CD8-positive, alpha-beta T cell (primary cell): ENCODE measurements at regions of chr2 and their contacts with region 1.

Region 1: GRCh38 chr2:135985018-135985825 is at the start of gene DARS1:
- DNase-seq: peak; percentile 58 to 91 (median 76)
- ATAC-seq: peak; percentile 82
- H3K4me3 ChIP-seq: peak within 1 kb of the TSS; percentile 99
- H3K4me3 Mint-ChIP-seq: peak within 1 kb of the TSS; percentile 94
- H3K27ac ChIP-seq: peak within 1 kb of the TSS; percentile 95 to 99
- H3K27ac Mint-ChIP-seq: peak within 1 kb of the TSS; percentile 98
- H3K4me1 ChIP-seq: peaks cover 30% of the 10 kb centered on the region
- H3K4me1 Mint-ChIP-seq: peaks cover 50% of the 10 kb centered on the region
- H3K27me3 ChIP-seq: no peaks in the 10 kb centered on the region
- H3K27me3 Mint-ChIP-seq: no peaks in the 10 kb centered on the region
- CTCF ChIP-seq: no peak
- total RNA-seq, gene DARS1: 33.4 to 35.8 TPM

Region 2: GRCh38 chr2:135741395-135742324 is 243.6 kb before region 1 on chr2 and contains the start of gene UBXN4:
- CTCF ChIA-PET with region 1: no interaction called
- POLR2A ChIA-PET with region 1: no interaction called
- intact Hi-C with region 1: loop called in 1 of 2 experiments (anchors 10 kb)
- DNase-seq: peak; percentile 89 to 99 (median 94)
- ATAC-seq: peak; percentile 87
- H3K4me3 ChIP-seq: peak within 1 kb of the TSS; percentile 69 to 96
- H3K4me3 Mint-ChIP-seq: peak within 1 kb of the TSS; percentile 98
- H3K27ac ChIP-seq: peak within 1 kb of the TSS; percentile 89 to 98
- H3K27ac Mint-ChIP-seq: peak within 1 kb of the TSS; percentile 98
- H3K4me1 ChIP-seq: peaks cover 28% of the 10 kb centered on the region
- H3K4me1 Mint-ChIP-seq: peaks cover 43% of the 10 kb centered on the region
- H3K27me3 ChIP-seq: no peaks in the 10 kb centered on the region
- H3K27me3 Mint-ChIP-seq: no peaks in the 10 kb centered on the region
- CTCF ChIP-seq: no peak
- total RNA-seq, gene UBXN4: 157 to 172 TPM

Region 3: GRCh38 chr2:135948642-135949355 is 36.4 kb before region 1 on chr2:
- CTCF ChIA-PET with region 1: no interaction called
- POLR2A ChIA-PET with region 1: no interaction called
- intact Hi-C with region 1: loop called (anchors 5 kb)
- DNase-seq: peak in 6 of 9 experiments; percentile 10 to 62 (median 25)
- ATAC-seq: peak; percentile 72
- H3K4me3 ChIP-seq: no peak overlapping the region
- H3K4me3 Mint-ChIP-seq: peak overlapping the region; percentile 37
- H3K27ac ChIP-seq: peak overlapping the region in 1 of 2 experiments; percentile 26
- H3K27ac Mint-ChIP-seq: peak overlapping the region; percentile 85
- H3K4me1 ChIP-seq: peaks cover 7% of the 10 kb centered on the region
- H3K4me1 Mint-ChIP-seq: peaks cover 61% of the 10 kb centered on the region
- H3K27me3 ChIP-seq: no peaks in the 10 kb centered on the region
- H3K27me3 Mint-ChIP-seq: no peaks in the 10 kb centered on the region
- CTCF ChIP-seq: no peak

Region 4: GRCh38 chr2:136052369-136053362 is 67.4 kb after region 1 on chr2:
- CTCF ChIA-PET with region 1: no interaction called
- POLR2A ChIA-PET with region 1: interaction called, 5 read pairs
- intact Hi-C with region 1: loop called in 1 of 2 experiments (anchors 5 kb)
- DNase-seq: peak in 2 of 9 experiments; percentile 39 to 60
- ATAC-seq: peak; percentile 22
- H3K4me3 ChIP-seq: no peak overlapping the region
- H3K4me3 Mint-ChIP-seq: peak overlapping the region; percentile 38
- H3K27ac ChIP-seq: peak overlapping the region; percentile 23 to 45
- H3K27ac Mint-ChIP-seq: peak overlapping the region; percentile 86
- H3K4me1 ChIP-seq: peaks cover 88% of the 10 kb centered on the region
- H3K4me1 Mint-ChIP-seq: peaks cover 82% of the 10 kb centered on the region
- H3K27me3 ChIP-seq: no peaks in the 10 kb centered on the region
- H3K27me3 Mint-ChIP-seq: no peaks in the 10 kb centered on the region
- CTCF ChIP-seq: no peak

Region 5: DNA sequence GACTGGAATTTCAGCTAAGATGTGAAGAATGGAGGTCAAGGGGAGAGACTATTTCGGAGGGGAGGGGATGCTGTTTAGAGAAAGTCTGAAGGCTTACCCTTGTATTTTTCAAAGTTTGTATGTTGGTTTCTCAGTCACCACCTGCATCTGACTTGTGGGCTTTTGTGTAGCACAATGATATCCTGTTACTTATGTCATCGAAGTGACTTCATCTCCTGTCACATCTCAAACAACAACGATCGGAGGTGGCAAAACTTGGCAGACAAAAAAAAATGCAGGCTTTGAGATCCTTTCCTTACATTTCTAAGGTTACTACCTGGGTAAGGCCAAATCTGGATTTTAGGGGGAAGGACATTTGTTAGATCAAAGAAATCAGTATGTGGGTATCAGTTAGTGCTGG is 144.4 kb after region 1 on chr2:
- CTCF ChIA-PET with region 1: interaction called, 3 read pairs
- POLR2A ChIA-PET with region 1: interaction called, 5 read pairs
- intact Hi-C with region 1: loop called in 1 of 2 experiments (anchors 1 kb)
- DNase-seq: peak in 6 of 9 experiments; percentile 37 to 94 (median 64)
- ATAC-seq: peak; percentile 34
- H3K4me3 ChIP-seq: peak overlapping the region; percentile 9 to 18
- H3K4me3 Mint-ChIP-seq: peak overlapping the region; percentile 76
- H3K27ac ChIP-seq: peak overlapping the region; percentile 91 to 98
- H3K27ac Mint-ChIP-seq: peak overlapping the region; percentile 100
- H3K4me1 ChIP-seq: peaks cover 90% of the 10 kb centered on the region
- H3K4me1 Mint-ChIP-seq: peaks cover 96% of the 10 kb centered on the region
- H3K27me3 ChIP-seq: no peaks in the 10 kb centered on the region
- H3K27me3 Mint-ChIP-seq: no peaks in the 10 kb centered on the region
- CTCF ChIP-seq: no peak

Region 6: GRCh38 chr2:136384531-136385303 is 399.5 kb after region 1 on chr2:
- CTCF ChIA-PET with region 1: interaction called, 10 read pairs
- POLR2A ChIA-PET with region 1: no interaction called
- intact Hi-C with region 1: loop called (anchors 2 kb)
- DNase-seq: peak in 8 of 9 experiments; percentile 32 to 82 (median 60)
- ATAC-seq: peak; percentile 53
- H3K4me3 ChIP-seq: no peak overlapping the region
- H3K4me3 Mint-ChIP-seq: no peak overlapping the region
- H3K27ac ChIP-seq: no peak overlapping the region
- H3K27ac Mint-ChIP-seq: peak overlapping the region; percentile 69
- H3K4me1 ChIP-seq: peaks cover 25% of the 10 kb centered on the region
- H3K4me1 Mint-ChIP-seq: peaks cover 36% of the 10 kb centered on the region
- H3K27me3 ChIP-seq: no peaks in the 10 kb centered on the region
- H3K27me3 Mint-ChIP-seq: no peaks in the 10 kb centered on the region
- CTCF ChIP-seq: peak; percentile 77